Activated B cell treated with CpG ODN at 0.5 μM for 24 hours (primary cell): ENCODE measurements at regions of chr5 and their contacts with region 1.

Region 1: DNA sequence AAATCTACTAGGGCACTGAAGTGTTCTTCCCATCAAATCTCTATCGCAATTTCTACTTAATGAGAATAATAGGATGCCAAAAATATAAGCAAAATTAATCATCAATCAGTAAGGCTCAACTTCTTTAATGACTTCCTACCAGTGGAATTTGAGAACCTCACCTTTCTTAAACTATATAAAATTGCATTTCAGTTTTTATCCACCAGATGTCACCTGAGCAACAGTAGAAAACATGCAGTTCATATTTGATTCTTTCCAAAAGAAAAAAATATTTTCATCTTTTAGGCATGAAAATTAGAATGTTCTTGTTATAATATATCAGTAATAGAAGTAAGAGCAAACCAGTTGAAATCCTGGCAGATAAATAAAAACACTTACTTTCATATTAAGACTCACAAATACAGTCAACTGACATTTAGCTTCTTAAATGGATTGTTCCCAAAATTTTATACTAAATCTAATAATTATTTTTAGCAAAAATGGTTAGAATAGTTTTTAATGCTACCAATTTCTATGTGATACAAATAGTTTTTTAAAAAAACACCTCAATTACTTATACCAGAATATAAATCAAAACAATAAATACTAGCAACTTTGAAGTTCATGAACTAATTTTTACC is 13.4 kb upstream of the CCDC112 start:
- DNase-seq: no peak
- ATAC-seq: peak; percentile 61
- H3K4me3 Mint-ChIP-seq: no peak overlapping the region
- H3K27ac Mint-ChIP-seq: no peak overlapping the region
- H3K4me1 Mint-ChIP-seq: no peaks in the 10 kb centered on the region
- H3K27me3 Mint-ChIP-seq: peaks cover 3% of the 10 kb centered on the region
- CTCF ChIP-seq: no peak

Region 2: GRCh38 chr5:113612060-113612496 is 1697.8 kb before region 1 on chr5:
- CTCF ChIA-PET with region 1: interaction called, 4 read pairs
- POLR2A ChIA-PET with region 1: no interaction called
- intact Hi-C with region 1: loop called (anchors 5 kb)
- DNase-seq: no peak
- ATAC-seq: peak; percentile 52
- H3K4me3 Mint-ChIP-seq: no peak overlapping the region
- H3K27ac Mint-ChIP-seq: no peak overlapping the region
- H3K4me1 Mint-ChIP-seq: no peaks in the 10 kb centered on the region
- H3K27me3 Mint-ChIP-seq: peaks cover 24% of the 10 kb centered on the region
- CTCF ChIP-seq: no peak

Region 3: DNA sequence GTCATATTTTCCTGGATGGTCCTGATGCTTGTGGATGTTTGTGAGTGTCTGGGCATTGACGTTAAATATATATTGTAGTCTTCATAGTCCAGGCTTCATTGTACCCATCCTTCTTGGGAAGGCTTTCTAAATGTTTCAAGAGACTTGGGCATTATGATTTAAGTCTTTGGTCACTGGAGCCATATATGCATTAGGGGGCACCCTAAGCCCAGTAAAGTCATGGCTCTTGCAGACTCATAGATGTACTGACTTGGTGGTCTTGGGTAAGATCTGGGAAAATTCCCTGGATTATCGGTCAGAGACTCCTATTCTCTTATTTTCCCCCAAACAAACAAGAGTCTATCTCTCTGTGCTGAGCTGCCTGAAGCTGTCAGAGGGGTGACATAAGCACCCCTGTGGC is 411.3 kb before region 1 on chr5:
- CTCF ChIA-PET with region 1: no interaction called
- POLR2A ChIA-PET with region 1: no interaction called
- intact Hi-C with region 1: no loop called
- DNase-seq: no peak
- ATAC-seq: no peak
- H3K4me3 Mint-ChIP-seq: no peak overlapping the region
- H3K27ac Mint-ChIP-seq: no peak overlapping the region
- H3K4me1 Mint-ChIP-seq: no peaks in the 10 kb centered on the region
- H3K27me3 Mint-ChIP-seq: no peaks in the 10 kb centered on the region
- CTCF ChIP-seq: no peak

Region 4: GRCh38 chr5:115586601-115587048 is 276.8 kb after region 1 on chr5:
- CTCF ChIA-PET with region 1: interaction called, 24 read pairs
- POLR2A ChIA-PET with region 1: interaction called, 7 read pairs
- intact Hi-C with region 1: loop called (anchors 1 kb)
- DNase-seq: no peak
- ATAC-seq: peak; percentile 60
- H3K4me3 Mint-ChIP-seq: no peak overlapping the region
- H3K27ac Mint-ChIP-seq: no peak overlapping the region
- H3K4me1 Mint-ChIP-seq: peaks cover 6% of the 10 kb centered on the region
- H3K27me3 Mint-ChIP-seq: no peaks in the 10 kb centered on the region
- CTCF ChIP-seq: no peak

Region 5: GRCh38 chr5:115625579-115626444 is 316.0 kb after region 1 on chr5 and contains the start of gene TMED7:
- CTCF ChIA-PET with region 1: interaction called, 3 read pairs
- POLR2A ChIA-PET with region 1: no interaction called
- intact Hi-C with region 1: loop called (anchors 2 kb)
- DNase-seq: peak; percentile 99
- ATAC-seq: peak; percentile 92
- H3K4me3 Mint-ChIP-seq: no peak within 1 kb of the TSS
- H3K27ac Mint-ChIP-seq: peak within 1 kb of the TSS; percentile 93
- H3K4me1 Mint-ChIP-seq: peaks cover 29% of the 10 kb centered on the region
- H3K27me3 Mint-ChIP-seq: no peaks in the 10 kb centered on the region
- CTCF ChIP-seq: no peak
- total RNA-seq, gene TMED7: 34.9 and 35.0 TPM in 2 replicates

Region 6: DNA sequence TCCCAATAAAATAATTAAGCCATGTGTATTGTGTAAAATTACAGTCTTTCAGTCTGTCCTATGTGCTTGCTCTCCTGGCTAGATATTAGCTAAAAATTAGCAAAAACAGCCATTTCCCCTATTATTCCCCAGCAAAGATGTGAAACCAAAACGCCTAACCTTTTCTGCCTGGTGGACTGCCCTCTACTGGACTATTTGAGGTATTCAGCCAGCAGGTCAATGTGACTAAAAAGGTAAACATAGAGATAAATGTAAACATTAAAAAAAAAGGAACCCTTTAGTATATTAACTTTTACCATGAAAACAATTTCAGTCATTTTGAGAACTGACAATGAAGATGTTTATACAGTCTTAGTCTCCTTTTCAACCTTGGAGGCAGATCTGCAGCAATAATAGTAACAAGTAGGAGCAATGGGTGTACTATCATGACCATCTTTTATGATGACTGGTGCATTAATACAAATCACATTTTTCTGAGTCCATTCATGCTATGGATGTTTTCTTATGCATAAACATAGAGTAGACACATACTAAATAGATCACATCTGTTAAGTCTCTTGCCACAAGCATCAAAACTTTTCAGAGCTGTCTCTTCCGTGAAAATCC is 521.4 kb after region 1 on chr5:
- CTCF ChIA-PET with region 1: interaction called, 5 read pairs
- POLR2A ChIA-PET with region 1: no interaction called
- intact Hi-C with region 1: loop called (anchors 2 kb)
- DNase-seq: no peak
- ATAC-seq: peak; percentile 64
- H3K4me3 Mint-ChIP-seq: no peak overlapping the region
- H3K27ac Mint-ChIP-seq: no peak overlapping the region
- H3K4me1 Mint-ChIP-seq: peaks cover 5% of the 10 kb centered on the region
- H3K27me3 Mint-ChIP-seq: no peaks in the 10 kb centered on the region
- CTCF ChIP-seq: peak; percentile 87